ENCODE measurements at regions of chr11 and their contacts with region 1.

Region 1: GRCh38 chr11:122863704-122864326 is 18.7 kb upstream of the JHY start:
- DNase-seq: peak; percentile 50 to 72 (median 66)
- H3K4me3 ChIP-seq: peak overlapping the region in 1 of 7 experiments; percentile 55
- H3K27ac ChIP-seq: no peak overlapping the region
- H3K4me1 ChIP-seq: peaks cover 4 to 10% (median 8%) of the 10 kb centered on the region in 4 experiments
- H3K27me3 ChIP-seq: no peaks in the 10 kb centered on the region

Region 2: GRCh38 chr11:122879785-122880184 is 16.0 kb after region 1 on chr11:
- CTCF ChIA-PET with region 1: interaction called, 10 read pairs
- POLR2A ChIA-PET with region 1: no interaction called
- DNase-seq: no peak
- H3K4me3 ChIP-seq: no peak overlapping the region
- H3K27ac ChIP-seq: no peak overlapping the region
- H3K4me1 ChIP-seq: peaks cover 0 to 29% (median 16%) of the 10 kb centered on the region in 4 experiments
- H3K27me3 ChIP-seq: no peaks in the 10 kb centered on the region

Region 3: GRCh38 chr11:122920579-122920978 is 56.8 kb after region 1 on chr11:
- CTCF ChIA-PET with region 1: no interaction called
- POLR2A ChIA-PET with region 1: no interaction called
- DNase-seq: no peak
- H3K4me3 ChIP-seq: no peak overlapping the region
- H3K27ac ChIP-seq: no peak overlapping the region
- H3K4me1 ChIP-seq: no peaks in the 10 kb centered on the region
- H3K27me3 ChIP-seq: no peaks in the 10 kb centered on the region

Region 4: DNA sequence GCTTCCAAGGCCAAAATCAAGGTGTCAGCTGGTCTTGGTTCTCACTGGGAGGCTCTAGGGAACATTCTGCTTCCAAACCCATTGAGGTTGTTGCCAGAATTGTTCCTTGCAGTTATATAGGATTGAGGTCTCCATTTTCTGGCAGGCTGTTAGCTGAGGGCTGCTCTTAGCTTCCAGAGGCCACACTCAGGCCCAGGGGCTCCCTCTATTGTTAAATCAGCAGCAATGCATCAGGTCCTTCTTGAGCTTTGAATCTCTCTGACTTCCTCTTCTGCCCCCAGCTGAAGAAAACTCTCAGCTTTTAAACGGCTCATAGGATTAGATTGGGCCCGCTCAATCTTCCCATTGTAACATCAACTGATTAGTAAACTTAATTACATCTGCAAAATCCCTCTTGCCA is 157.2 kb after region 1 on chr11:
- CTCF ChIA-PET with region 1: interaction called, 162 read pairs
- POLR2A ChIA-PET with region 1: no interaction called
- DNase-seq: peak; percentile 66 to 83 (median 80)
- H3K4me3 ChIP-seq: no peak overlapping the region
- H3K27ac ChIP-seq: no peak overlapping the region
- H3K4me1 ChIP-seq: peaks cover 0 to 5% (median 0%) of the 10 kb centered on the region in 4 experiments
- H3K27me3 ChIP-seq: no peaks in the 10 kb centered on the region

Region 5: DNA sequence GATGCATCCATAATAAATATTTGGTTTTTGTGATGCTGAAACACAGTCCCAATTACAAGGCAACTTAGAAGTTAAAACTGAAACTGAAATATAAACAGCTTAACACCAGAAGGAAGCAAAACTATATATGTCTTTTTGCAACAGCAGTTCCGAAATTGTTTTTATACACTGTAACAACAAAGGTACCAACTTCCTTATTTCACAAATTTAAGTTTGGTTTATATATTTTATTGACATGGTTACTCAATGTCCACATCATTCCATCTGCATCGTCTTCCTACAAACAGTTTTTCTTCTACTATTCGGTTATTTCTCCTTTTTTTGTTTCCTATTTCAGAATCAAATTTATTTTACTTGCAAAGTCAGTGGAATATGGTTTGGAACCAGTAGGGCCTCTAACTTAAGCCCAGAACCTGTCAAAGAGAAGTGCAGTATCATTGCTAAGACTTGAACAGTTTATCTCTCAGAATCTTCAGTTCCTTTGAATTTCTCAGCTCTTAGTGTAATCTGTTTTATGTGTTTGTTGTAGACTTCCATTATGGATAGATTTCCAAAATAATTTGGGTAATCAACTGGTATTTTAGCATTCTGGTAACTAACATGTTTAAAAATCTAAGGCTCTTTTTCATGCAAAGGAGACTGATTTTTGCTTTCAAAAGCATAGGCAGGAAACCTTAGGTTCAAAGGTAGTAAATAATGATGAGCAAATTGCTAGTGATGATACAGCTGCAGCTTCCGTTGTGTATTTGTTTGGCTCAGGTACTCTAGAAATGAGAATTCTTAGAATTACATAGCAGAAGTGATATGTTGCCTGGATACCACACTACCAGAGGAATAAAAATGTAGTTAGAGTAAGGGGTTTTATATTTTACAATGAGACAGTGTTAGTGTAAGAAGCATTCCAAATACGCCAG is 206.3 kb after region 1 on chr11:
- CTCF ChIA-PET with region 1: no interaction called
- POLR2A ChIA-PET with region 1: no interaction called
- DNase-seq: peak; percentile 21 to 73 (median 64)
- H3K4me3 ChIP-seq: peak overlapping the region in 6 of 7 experiments; percentile 53 to 70 (median 61)
- H3K27ac ChIP-seq: peak overlapping the region; percentile 59 to 77
- H3K4me1 ChIP-seq: peaks cover 0 to 21% (median 15%) of the 10 kb centered on the region in 4 experiments
- H3K27me3 ChIP-seq: no peaks in the 10 kb centered on the region